Breast epithelium (tissue), 4 donors: ENCODE measurements at regions of chr6 and their contacts with region 1.

Region 1: GRCh38 chr6:39830444-39830843 is 38.3 kb downstream of the DAAM2 start:
- DNase-seq: no peak
- H3K4me3 ChIP-seq: peak overlapping the region in 1 of 3 donors; percentile 2
- H3K27ac ChIP-seq: peak overlapping the region in 1 of 2 donors; percentile 58
- H3K4me1 ChIP-seq: no peaks in the 10 kb centered on the region
- H3K27me3 ChIP-seq: no peaks in the 10 kb centered on the region
- CTCF ChIP-seq: no peak
- POLR2A ChIP-seq: no peak

Region 2: GRCh38 chr6:38639498-38640215 is 1190.8 kb before region 1 on chr6 and contains the start of gene BTBD9:
- intact Hi-C with region 1: loop called (anchors 5 kb)
- DNase-seq: peak; percentile 67 to 72
- H3K4me3 ChIP-seq: peak within 1 kb of the TSS; percentile 71 to 100 (median 82)
- H3K27ac ChIP-seq: peak within 1 kb of the TSS; percentile 91 to 99
- H3K4me1 ChIP-seq: peaks cover 0 to 5% of the 10 kb centered on the region in 2 donors
- H3K27me3 ChIP-seq: no peaks in the 10 kb centered on the region
- CTCF ChIP-seq: no peak
- POLR2A ChIP-seq: no peak
- total RNA-seq, gene BTBD9: 12.8 to 25.5 (median 19.0) TPM

Region 3: GRCh38 chr6:39853604-39854003 is 23.2 kb after region 1 on chr6:
- intact Hi-C with region 1: loop called (anchors 1 kb)
- DNase-seq: no peak
- H3K4me3 ChIP-seq: no peak overlapping the region
- H3K27ac ChIP-seq: peak overlapping the region in 1 of 2 donors; percentile 8
- H3K4me1 ChIP-seq: no peaks in the 10 kb centered on the region
- H3K27me3 ChIP-seq: no peaks in the 10 kb centered on the region
- CTCF ChIP-seq: no peak
- POLR2A ChIP-seq: no peak

Region 4: GRCh38 chr6:39867592-39867991 is 37.1 kb after region 1 on chr6:
- intact Hi-C with region 1: loop called (anchors 1 kb)
- DNase-seq: no peak
- H3K4me3 ChIP-seq: no peak overlapping the region
- H3K27ac ChIP-seq: no peak overlapping the region
- H3K4me1 ChIP-seq: no peaks in the 10 kb centered on the region
- H3K27me3 ChIP-seq: no peaks in the 10 kb centered on the region
- CTCF ChIP-seq: no peak
- POLR2A ChIP-seq: no peak

Region 5: GRCh38 chr6:39964094-39964493 is 133.7 kb after region 1 on chr6:
- intact Hi-C with region 1: no loop called
- DNase-seq: no peak
- H3K4me3 ChIP-seq: no peak overlapping the region
- H3K27ac ChIP-seq: no peak overlapping the region
- H3K4me1 ChIP-seq: no peaks in the 10 kb centered on the region
- H3K27me3 ChIP-seq: no peaks in the 10 kb centered on the region
- CTCF ChIP-seq: no peak
- POLR2A ChIP-seq: no peak

Region 6: GRCh38 chr6:40022867-40023266 is 192.4 kb after region 1 on chr6:
- intact Hi-C with region 1: no loop called
- DNase-seq: no peak
- H3K4me3 ChIP-seq: no peak overlapping the region
- H3K27ac ChIP-seq: no peak overlapping the region
- H3K4me1 ChIP-seq: no peaks in the 10 kb centered on the region
- H3K27me3 ChIP-seq: peaks cover 0 to 5% of the 10 kb centered on the region in 2 donors
- CTCF ChIP-seq: no peak
- POLR2A ChIP-seq: no peak